Heart right ventricle (tissue), 16 donors: ENCODE measurements at regions of chr18 and their contacts with region 1.

Region 1: DNA sequence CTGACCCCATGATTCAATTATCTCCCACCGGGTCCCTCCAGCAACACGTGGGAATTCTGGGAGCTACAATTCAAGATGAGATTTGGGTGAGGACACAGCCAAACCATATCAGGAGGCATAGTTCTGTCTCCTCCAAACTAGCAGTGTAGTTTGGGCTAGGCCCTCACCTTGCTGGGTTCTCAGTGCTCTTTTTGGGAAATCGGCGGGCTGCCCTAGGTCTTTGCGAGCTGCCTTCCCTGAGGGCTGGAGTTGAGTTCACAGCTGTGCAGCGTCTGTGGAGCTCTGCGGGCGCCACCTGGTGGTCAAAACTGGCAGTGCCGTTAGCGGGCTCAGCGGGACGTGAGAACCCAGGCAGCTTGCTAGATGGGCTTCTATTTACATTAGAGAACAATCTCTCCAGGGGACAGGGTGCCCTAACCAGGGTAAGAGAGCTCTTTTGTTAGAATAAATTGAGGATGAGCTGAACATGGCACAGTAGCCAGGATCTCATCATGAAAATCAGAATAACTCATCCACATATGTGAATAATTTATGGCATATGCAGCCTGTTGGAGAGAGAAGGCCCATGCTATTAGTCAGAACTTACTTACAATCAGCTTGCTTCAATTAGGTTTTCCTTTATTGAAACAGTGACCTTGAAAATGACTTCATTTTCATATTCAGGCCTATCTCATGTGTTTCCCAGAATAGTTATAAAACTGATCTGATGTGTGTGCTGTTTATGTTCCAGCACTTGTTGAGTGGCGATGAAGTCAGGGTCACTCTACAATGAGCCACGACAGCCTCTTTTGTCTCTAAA is 27.4 kb upstream of the YES1 start:
- DNase-seq: peak; percentile 84 to 89
- ATAC-seq: peak; percentile 93 to 97 (median 95)
- H3K4me3 ChIP-seq: no peak overlapping the region
- H3K27ac ChIP-seq: peak overlapping the region in 4 of 10 donors; percentile 6 to 39 (median 24)
- H3K4me1 ChIP-seq: peaks cover 0 to 12% (median 8%) of the 10 kb centered on the region in 9 donors
- H3K27me3 ChIP-seq: peaks cover 0 to 9% (median 0%) of the 10 kb centered on the region in 7 donors
- CTCF ChIP-seq: peak; percentile 84 to 99 (median 97)

Region 2: DNA sequence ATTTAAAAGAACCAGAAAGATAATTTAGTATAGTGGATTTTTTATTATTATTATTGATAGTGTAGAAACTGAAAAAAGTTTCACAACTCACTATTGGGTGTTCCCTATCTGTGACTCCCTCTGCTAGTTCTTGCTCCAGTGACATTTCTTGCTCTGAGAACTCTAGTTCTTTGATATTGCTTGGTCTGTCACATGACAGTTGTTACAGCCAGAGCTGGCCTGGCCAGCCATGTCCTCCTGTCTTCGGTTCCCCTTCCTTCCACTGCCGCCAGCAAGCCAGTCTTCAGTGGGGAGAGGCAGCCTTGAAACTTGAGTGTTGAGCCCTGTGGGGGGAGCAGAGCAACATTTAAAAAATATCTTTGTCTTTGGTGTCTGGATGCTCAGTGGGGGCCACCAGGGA is 563.9 kb before region 1 on chr18:
- intact Hi-C with region 1: loop called in 4 of 10 experiments (anchors 10 kb)
- DNase-seq: no peak
- ATAC-seq: peak in 1 of 8 donors; percentile 55
- H3K4me3 ChIP-seq: no peak overlapping the region
- H3K27ac ChIP-seq: no peak overlapping the region
- H3K4me1 ChIP-seq: no peaks in the 10 kb centered on the region
- H3K27me3 ChIP-seq: peaks cover 0 to under 1% (median 0%) of the 10 kb centered on the region in 7 donors
- CTCF ChIP-seq: no peak

Region 3: GRCh38 chr18:286515-287310 is 552.7 kb before region 1 on chr18:
- intact Hi-C with region 1: loop called in 3 of 10 experiments (anchors 10 kb)
- DNase-seq: no peak
- ATAC-seq: peak in 3 of 8 donors; percentile 55 to 65 (median 61)
- H3K4me3 ChIP-seq: no peak overlapping the region
- H3K27ac ChIP-seq: no peak overlapping the region
- H3K4me1 ChIP-seq: peaks cover 0 to 11% (median 0%) of the 10 kb centered on the region in 9 donors
- H3K27me3 ChIP-seq: peaks cover 0 to 8% (median 0%) of the 10 kb centered on the region in 7 donors
- CTCF ChIP-seq: peak; percentile 17 to 72 (median 57)

Region 4: DNA sequence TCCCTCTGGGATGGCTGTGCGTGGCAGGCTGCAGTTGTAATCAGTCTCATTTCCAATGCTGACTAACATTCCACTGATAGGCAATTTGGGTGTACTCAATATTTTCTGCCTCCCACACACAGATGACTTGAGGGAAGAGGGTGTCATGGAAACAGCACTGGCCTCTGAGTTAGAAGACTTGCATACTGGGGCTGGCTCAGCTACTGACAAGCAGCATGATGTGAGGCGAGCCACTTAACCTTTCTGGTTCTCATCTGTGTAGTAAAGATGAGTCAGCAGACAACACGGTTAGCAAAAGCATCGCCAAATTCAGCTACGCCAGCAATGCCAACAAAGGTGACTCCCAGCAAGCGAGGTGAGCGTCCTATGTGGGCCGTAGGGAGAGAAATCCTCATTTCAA is 412.4 kb before region 1 on chr18:
- intact Hi-C with region 1: no loop called
- DNase-seq: no peak
- ATAC-seq: peak in 6 of 8 donors; percentile 44 to 79 (median 65)
- H3K4me3 ChIP-seq: no peak overlapping the region
- H3K27ac ChIP-seq: no peak overlapping the region
- H3K4me1 ChIP-seq: peaks cover 2 to 31% (median 14%) of the 10 kb centered on the region in 9 donors
- H3K27me3 ChIP-seq: no peaks in the 10 kb centered on the region
- CTCF ChIP-seq: no peak

Region 5: DNA sequence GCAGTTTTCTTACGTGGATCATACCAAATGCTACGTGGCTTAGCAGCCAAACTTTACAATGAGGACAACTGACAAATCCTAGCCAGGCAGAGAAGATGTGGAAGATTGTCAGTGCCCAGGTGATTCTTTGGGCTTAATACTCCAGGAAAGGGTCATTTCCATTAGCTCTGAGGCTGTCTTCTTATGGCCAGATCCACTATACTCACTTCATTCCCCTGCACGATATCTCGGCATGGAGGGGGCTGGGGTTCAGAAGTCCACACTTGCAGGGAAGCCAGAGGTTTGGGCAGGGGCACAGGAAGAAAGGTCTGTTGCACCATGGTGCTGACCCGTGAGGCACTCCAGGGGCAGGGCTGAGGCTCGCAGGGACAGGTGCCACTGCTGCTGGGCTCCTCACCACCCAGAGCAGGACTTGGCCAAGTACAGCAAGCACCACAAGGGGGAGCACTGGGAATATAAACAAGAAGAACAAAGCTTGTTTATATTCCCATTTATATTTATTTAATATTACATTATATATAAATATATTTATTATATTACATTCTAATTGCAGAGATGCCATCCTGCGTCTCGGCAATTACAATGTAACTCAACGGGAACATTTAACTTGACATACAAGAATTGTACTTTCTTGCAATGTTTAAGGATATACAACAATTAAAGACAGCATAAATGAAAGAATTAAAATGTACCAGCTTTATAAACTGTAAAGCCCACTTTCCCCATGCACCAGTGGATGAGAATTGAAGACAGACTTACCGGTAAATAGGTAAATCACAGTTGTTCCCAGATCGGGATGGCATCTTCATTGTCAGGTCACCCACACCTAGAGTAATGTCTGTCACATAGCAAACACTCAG is 215.4 kb before region 1 on chr18:
- intact Hi-C with region 1: loop called in 9 of 10 experiments (anchors 2 to 10 kb)
- DNase-seq: peak; percentile 43 to 62
- ATAC-seq: peak in 5 of 8 donors; percentile 49 to 75 (median 73)
- H3K4me3 ChIP-seq: no peak overlapping the region
- H3K27ac ChIP-seq: no peak overlapping the region
- H3K4me1 ChIP-seq: no peaks in the 10 kb centered on the region
- H3K27me3 ChIP-seq: peaks cover 0 to 16% (median 0%) of the 10 kb centered on the region in 7 donors
- CTCF ChIP-seq: peak; percentile 48 to 85 (median 80)

Region 6: DNA sequence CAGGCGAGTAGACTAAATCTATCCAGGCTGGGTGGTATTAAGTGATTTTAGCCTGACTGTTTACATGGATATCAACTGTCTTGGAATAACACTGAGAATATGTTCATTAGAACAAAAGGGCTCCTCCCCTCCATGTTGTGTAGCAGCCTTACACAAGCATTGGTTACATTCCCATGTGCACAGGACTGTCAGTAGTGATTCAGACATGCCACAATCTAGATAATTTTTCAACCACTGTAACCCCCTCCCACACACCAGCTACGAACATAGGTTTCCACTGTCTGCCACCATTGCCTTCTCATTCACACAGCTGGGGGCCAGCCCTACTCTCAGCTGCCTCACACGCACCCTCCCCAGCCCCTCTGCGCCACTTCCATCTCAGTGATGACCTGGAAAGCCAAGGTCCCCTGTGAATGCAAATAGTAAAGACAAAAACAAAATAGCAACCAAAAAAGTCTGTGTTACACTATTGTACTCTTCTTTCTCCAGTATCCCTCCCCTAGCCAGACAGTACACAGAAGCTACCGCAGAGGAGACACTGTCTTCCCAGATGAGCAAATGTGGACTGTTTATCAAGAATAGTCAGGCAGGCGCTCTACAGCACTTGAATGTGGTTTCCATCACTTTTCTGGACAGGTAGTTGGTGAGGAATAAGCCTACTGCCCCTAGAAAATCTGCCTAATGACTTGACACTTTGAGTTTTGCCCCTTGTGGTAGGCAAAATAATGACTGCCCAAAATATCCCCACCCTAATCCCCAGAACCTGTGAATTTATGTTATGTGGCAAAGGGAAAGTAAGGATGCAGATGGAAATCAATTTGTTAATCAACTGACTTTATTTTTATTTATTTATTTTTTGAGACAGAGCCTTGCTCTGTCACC is 209.9 kb before region 1 on chr18:
- intact Hi-C with region 1: loop called in 9 of 10 experiments (anchors 2 to 10 kb)
- DNase-seq: no peak
- ATAC-seq: no peak
- H3K4me3 ChIP-seq: no peak overlapping the region
- H3K27ac ChIP-seq: no peak overlapping the region
- H3K4me1 ChIP-seq: no peaks in the 10 kb centered on the region
- H3K27me3 ChIP-seq: peaks cover 0 to 8% (median 0%) of the 10 kb centered on the region in 7 donors
- CTCF ChIP-seq: no peak

Region 7: DNA sequence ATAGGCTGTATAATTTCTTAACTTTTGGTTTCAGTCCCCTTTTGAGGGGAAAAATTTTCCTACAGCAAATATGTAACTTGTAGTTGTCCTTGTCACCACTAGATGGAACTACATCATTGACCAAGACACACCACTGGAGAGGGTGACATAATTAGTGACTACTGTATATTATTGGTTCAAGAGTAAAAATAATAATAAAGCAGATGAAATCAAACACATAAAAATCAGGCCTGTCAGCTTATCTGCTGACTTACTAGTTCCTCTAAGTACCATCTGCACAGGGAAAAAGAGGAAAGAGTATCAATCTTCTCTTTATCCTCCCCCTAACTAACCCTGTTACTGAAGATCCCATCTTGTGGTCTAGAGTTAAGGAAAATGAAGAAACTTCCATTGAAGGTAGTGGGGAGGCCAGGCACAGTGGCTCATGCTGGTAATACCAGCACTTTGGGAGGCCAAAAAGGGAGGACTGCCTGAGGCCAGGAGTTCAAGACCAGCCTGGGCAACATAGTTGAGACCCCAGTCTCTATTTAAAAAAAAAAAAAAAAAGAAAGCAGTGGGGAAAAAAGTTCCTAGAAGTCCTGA is 97.4 kb before region 1 on chr18:
- intact Hi-C with region 1: loop called in 4 of 10 experiments (anchors 2 to 5 kb)
- DNase-seq: no peak
- ATAC-seq: peak; percentile 55 to 87 (median 76)
- H3K4me3 ChIP-seq: no peak overlapping the region
- H3K27ac ChIP-seq: peak overlapping the region in 2 of 10 donors; percentile 21 to 42
- H3K4me1 ChIP-seq: peaks cover 0 to 10% (median 0%) of the 10 kb centered on the region in 9 donors
- H3K27me3 ChIP-seq: no peaks in the 10 kb centered on the region
- CTCF ChIP-seq: peak; percentile 65 to 89 (median 80)

Region 8: GRCh38 chr18:987325-988186 is 148.1 kb after region 1 on chr18:
- intact Hi-C with region 1: no loop called
- DNase-seq: peak in 1 of 2 donors; percentile 20
- ATAC-seq: peak in 7 of 8 donors; percentile 55 to 88 (median 79)
- H3K4me3 ChIP-seq: no peak overlapping the region
- H3K27ac ChIP-seq: peak overlapping the region in 6 of 10 donors; percentile 30 to 65 (median 46)
- H3K4me1 ChIP-seq: peaks cover 0 to 33% (median 11%) of the 10 kb centered on the region in 9 donors
- H3K27me3 ChIP-seq: no peaks in the 10 kb centered on the region
- CTCF ChIP-seq: no peak